ENCODE measurements at regions of chr11 and their contacts with region 1.

Region 1: GRCh38 chr11:36425561-36426081 is 84.5 kb downstream of the TRAF6 start:
- DNase-seq: no peak
- H3K4me3 Mint-ChIP-seq: no peak overlapping the region
- H3K27ac Mint-ChIP-seq: peak overlapping the region; percentile 25
- H3K4me1 Mint-ChIP-seq: peaks cover 62% of the 10 kb centered on the region
- H3K27me3 Mint-ChIP-seq: no peaks in the 10 kb centered on the region

Region 2: DNA sequence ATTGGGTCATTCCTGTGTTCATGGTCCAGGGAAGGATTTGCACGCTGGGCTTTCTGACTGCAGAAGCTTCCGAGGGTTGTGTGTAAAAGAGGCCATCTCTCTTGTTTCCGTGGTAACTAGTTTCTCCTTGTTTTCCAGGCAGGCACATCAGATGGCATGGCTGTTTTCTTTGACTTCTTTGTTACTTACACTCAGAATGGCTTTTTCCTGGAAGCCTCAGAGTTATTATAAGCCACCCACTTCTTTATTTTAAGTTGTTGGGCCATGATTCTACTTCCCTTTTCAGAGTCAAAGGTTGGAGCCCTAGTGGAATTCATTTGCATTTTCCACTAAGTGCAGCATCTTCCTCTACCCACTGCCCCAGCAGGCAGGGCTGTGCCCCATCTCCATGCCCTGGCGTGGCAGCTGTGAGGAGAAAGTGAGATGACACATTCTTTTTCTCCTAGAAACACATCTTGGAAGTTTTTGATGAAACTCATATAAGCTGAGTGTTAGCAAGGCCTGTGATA is 34.6 kb before region 1 on chr11:
- intact Hi-C with region 1: loop called (anchors 1 kb)
- DNase-seq: no peak
- H3K4me3 Mint-ChIP-seq: peak overlapping the region; percentile 40
- H3K27ac Mint-ChIP-seq: peak overlapping the region; percentile 66
- H3K4me1 Mint-ChIP-seq: peaks cover 86% of the 10 kb centered on the region
- H3K27me3 Mint-ChIP-seq: no peaks in the 10 kb centered on the region

Region 3: DNA sequence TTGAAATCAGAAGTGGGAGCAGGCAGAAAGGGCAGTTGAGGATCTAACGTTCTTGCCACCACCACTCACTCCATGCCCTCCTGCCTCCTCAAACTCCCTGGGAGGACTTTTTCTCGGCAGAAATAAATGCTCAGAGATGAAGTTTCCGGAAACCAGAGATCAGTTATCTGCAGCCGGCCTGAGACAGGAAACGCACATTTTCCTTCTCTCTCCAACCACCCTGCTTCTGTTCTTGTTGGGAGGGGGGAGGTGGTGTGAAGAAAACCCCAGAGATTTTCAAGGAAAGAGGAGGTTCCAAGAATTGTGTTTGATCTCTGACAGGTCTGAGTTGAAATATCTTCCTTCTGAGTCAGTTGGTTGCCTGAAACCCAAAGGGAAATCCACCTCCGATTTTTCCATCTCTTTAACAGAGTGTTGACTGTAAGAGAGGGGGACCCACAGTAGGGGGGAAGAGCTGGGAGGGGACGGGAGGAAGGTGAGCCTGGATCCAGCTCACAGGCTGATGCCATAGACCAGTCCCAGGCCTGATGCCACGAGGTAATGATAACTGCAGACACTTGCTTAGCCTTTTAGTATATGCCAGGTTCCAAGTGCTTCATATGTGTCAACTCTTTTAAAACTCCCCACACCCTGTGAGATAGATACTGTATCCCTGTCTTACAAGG is 16.3 kb before region 1 on chr11:
- intact Hi-C with region 1: loop called (anchors 1 kb)
- DNase-seq: peak; percentile 49
- H3K4me3 Mint-ChIP-seq: peak overlapping the region; percentile 69
- H3K27ac Mint-ChIP-seq: peak overlapping the region; percentile 94
- H3K4me1 Mint-ChIP-seq: peaks cover 80% of the 10 kb centered on the region
- H3K27me3 Mint-ChIP-seq: no peaks in the 10 kb centered on the region

Region 4: DNA sequence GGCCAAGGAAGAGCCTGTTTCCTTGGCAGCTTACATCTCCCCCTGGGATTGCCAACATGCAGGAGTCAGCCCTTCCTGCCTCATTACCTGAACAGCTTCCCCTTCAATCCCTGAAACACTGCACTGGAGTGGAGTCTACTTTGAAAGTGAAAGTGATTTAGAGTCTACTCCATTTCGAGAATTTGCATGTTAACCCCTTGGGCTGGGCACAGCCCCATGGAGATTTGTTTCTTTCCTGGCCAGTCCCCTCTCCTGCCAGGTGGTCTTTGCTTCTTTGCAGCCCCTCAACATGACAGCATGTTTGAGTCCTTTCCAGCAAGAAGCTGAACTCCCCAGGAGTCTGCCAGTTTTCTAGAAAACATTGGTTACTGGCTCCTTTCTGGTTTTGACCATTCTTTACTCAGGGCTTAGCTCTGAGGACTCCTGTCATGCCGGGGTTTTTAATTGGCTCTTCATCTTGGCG is 24.5 kb after region 1 on chr11:
- intact Hi-C with region 1: loop called (anchors 2 kb)
- DNase-seq: no peak
- H3K4me3 Mint-ChIP-seq: peak overlapping the region; percentile 12
- H3K27ac Mint-ChIP-seq: no peak overlapping the region
- H3K4me1 Mint-ChIP-seq: peaks cover 49% of the 10 kb centered on the region
- H3K27me3 Mint-ChIP-seq: no peaks in the 10 kb centered on the region

Region 5: GRCh38 chr11:37280200-37280599 is 854.6 kb after region 1 on chr11:
- intact Hi-C with region 1: no loop called
- DNase-seq: no peak
- H3K4me3 Mint-ChIP-seq: no peak overlapping the region
- H3K27ac Mint-ChIP-seq: no peak overlapping the region
- H3K4me1 Mint-ChIP-seq: no peaks in the 10 kb centered on the region
- H3K27me3 Mint-ChIP-seq: no peaks in the 10 kb centered on the region

Measured in activated T-helper 1 cell treated with anti-CD3 and anti-CD28 coated beads, Interleukin-12 subunit alpha, Interleukin-12 subunit beta, Interleukin-2, Interleukin-4 antibody, amounts not matched to agents 30 ng/mL and 10 ng/mL and 1 ng/mL, durations not matched to agents 14 hours and 24 hours and 36 hours (primary cell).